Posterior vena cava (tissue), 2 donors: ENCODE measurements at regions of chr9 and their contacts with region 1.

Region 1: GRCh38 chr9:24118190-24118589 is 292.1 kb upstream of the ELAVL2 start:
- DNase-seq: peak; percentile 54

Region 2: DNA sequence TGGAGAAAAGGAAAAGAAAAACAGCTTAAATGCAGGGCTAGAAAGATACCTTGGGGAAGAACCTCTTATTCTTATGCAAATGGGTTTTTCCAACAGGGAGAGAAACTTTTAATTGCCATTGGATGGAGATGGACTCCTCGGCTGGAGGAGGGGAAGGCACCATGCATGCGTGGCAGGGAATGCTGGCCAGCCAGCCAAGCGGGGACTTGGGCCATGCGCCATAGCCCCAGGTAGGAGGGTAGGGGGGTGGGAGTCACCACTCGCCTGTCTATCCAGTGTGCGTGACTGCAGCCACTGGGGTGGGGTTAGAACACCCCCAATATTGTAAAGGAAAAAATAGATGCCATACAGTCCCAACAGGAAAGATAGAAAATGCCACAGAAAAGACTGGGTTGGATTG is 172.3 kb before region 1 on chr9:
- intact Hi-C with region 1: loop called in 1 of 2 experiments (anchors 5 kb)
- DNase-seq: no peak

Region 3: GRCh38 chr9:25412646-25413045 is 1294.5 kb after region 1 on chr9:
- intact Hi-C with region 1: no loop called
- DNase-seq: no peak